ENCODE measurements at regions of chr15 and their contacts with region 1.

Region 1: DNA sequence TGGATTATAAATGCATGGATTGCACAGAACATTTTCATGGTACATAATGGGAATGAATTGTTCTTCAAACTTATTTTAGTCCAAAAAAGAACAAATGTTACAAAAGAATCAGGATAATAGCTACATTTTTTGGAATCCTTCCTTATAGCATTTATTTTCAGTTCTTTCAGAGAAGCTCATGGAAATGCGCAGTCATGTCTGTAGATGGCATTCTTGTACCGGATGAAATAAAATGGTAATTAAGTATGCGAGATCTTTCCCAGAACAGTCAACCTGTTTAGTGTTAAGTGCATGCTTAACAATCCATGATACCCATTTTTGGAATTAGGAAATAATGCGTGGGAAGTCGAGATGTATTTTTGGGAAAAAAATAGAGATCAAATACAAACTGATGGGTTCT is 38.2 kb upstream of the GOLGA8B start:
- DNase-seq: peak; percentile 67
- H3K4me3 ChIP-seq: no peak overlapping the region
- H3K27ac ChIP-seq: no peak overlapping the region
- H3K4me1 ChIP-seq: no peaks in the 10 kb centered on the region; the same call in 1 of the 2 replicates
- H3K27me3 ChIP-seq: 0 out of 2 replicates have a peak, but pooled peaks cover 10% of the 10 kb centered on the region

Region 2: DNA sequence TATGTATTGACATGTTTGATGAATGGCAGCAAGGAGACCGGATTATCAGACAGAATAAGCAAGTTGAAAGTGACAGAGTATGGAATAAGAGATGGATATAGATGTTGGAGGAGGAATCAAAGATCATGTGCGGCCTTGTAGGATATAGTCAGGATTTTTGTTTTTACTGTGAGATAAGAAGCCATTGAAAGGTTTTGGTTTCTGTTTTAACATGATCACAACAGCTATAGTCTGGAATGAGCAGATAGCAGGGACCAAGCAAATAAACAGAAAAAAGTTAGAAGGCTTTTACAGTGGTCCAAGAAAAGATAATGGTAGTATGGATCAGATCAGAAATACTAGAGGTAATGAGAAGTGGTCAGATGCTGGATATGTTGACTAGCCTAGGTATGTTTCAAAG is 336.7 kb before region 1 on chr15:
- in situ Hi-C with region 1: no loop called
- DNase-seq: no peak
- H3K4me3 ChIP-seq: no peak overlapping the region
- H3K27ac ChIP-seq: no peak overlapping the region
- H3K4me1 ChIP-seq: no peaks in the 10 kb centered on the region
- H3K27me3 ChIP-seq: no peaks in the 10 kb centered on the region

Region 3: GRCh38 chr15:34927726-34928125 is 306.1 kb after region 1 on chr15:
- in situ Hi-C with region 1: loop called (anchors 5 kb)
- DNase-seq: no peak
- H3K4me3 ChIP-seq: no peak overlapping the region
- H3K27ac ChIP-seq: no peak overlapping the region
- H3K4me1 ChIP-seq: no peaks in the 10 kb centered on the region
- H3K27me3 ChIP-seq: no peaks in the 10 kb centered on the region